ENCODE measurements at regions of chrX and their contacts with region 1.

Region 1: GRCh38 chrX:65985922-65986588 is 53.8 kb downstream of the VSIG4 start:
- DNase-seq: no peak
- ATAC-seq: peak; percentile 92
- H3K4me3 ChIP-seq: no peak overlapping the region
- H3K27ac ChIP-seq: peak overlapping the region; percentile 8
- H3K4me1 ChIP-seq: peaks cover 6% of the 10 kb centered on the region
- H3K27me3 ChIP-seq: no peaks in the 10 kb centered on the region
- CTCF ChIP-seq: peak; percentile 53

Region 2: DNA sequence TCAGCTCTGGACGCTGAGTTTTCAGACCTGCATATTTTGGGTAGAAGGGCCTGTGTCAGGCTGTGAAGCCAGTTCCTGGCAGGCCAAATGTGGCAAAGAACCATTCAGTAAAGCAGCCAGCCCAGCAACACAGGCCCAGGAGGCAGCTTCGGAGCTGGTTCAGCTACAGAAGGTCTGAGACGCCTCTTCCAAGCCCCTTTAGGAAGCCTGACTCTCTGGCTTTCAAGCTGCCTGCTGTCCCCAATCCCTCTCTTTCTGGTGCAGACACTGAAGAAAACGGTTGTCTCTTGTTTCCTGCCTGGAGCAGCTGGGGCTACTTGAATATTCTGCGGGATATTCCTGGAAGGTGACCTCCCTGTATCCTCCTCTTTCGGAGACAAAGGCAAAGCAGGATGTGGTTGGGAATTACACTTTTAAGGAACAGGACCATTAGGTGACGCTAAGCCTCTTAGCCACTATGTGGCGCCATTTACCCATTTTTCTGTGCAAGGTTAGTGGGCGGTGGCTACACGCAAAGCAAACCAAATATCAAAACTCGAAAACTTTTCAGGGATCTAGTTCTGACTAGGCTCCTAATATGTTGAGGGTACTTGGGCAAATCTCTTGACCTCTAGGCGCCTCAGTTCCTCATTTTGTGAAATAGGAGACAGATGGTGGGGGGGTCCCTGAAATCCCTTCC is 404.3 kb before region 1 on chrX:
- intact Hi-C with region 1: loop called (anchors 10 kb)
- DNase-seq: no peak
- ATAC-seq: peak; percentile 93
- H3K4me3 ChIP-seq: no peak overlapping the region
- H3K27ac ChIP-seq: no peak overlapping the region
- H3K4me1 ChIP-seq: no peaks in the 10 kb centered on the region
- H3K27me3 ChIP-seq: no peaks in the 10 kb centered on the region
- CTCF ChIP-seq: peak; percentile 72